Esophagus muscularis mucosa (tissue), 4 donors: ENCODE measurements at regions of chr1 and their contacts with region 1.

Region 1: DNA sequence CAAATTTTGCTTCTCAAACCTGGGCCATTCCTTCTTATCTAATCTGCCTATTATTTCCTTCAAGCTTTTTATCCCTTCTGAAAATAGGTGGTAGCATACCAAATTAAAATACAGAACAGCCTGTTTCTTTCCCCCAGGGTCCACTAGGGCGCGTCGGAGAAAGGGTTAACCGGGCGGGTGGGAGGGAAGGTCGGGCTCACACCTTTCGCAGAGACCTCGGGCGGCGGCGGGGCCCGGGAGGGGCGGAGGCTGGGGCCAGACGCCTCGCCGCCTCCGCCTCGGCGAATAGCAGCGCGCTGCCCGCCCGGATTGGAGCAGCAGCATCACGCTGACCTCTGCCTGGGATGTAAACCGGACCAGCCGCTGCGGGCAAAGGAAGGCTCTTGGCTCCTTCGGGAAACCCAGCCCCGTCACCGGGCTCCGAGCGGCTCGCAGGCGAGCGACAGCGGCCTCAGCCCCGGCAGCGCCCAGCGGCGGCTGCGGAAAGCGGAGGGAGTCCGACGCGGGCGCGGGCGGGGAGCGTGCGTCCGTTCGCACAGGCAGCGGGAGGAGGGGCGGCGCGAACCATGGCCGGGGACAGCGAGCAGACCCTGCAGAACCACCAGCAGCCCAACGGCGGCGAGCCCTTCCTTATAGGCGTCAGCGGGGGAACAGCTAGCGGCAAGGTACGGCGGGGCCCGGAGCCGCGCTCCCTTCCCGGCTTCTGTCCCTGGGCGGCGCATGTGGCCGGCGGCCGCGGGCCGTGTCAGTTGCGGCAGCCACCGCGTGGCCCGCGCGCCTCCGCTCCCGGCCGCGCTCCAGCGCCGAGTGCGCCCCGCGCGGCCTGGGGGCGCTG is at the start of gene UCK2:
- DNase-seq: peak; percentile 93
- H3K4me3 ChIP-seq: peak within 1 kb of the TSS; percentile 78 to 93 (median 86)
- H3K27ac ChIP-seq: peak within 1 kb of the TSS; percentile 88 to 97 (median 90)
- H3K4me1 ChIP-seq: peaks cover 14 to 24% (median 19%) of the 10 kb centered on the region in 4 donors
- H3K27me3 ChIP-seq: no peaks in the 10 kb centered on the region
- CTCF ChIP-seq: peak in 1 of 3 experiments; percentile 18
- EP300 ChIP-seq: no peak
- POLR2A ChIP-seq: peak; percentile 63
- total RNA-seq, gene UCK2: 13.7 to 33.7 (median 31.0) TPM

Region 2: GRCh38 chr1:165726169-165726568 is 101.3 kb before region 1 on chr1:
- intact Hi-C with region 1: no loop called
- DNase-seq: no peak
- H3K4me3 ChIP-seq: no peak overlapping the region
- H3K27ac ChIP-seq: no peak overlapping the region
- H3K4me1 ChIP-seq: no peaks in the 10 kb centered on the region
- H3K27me3 ChIP-seq: no peaks in the 10 kb centered on the region
- CTCF ChIP-seq: no peak
- EP300 ChIP-seq: no peak
- POLR2A ChIP-seq: no peak

Region 3: DNA sequence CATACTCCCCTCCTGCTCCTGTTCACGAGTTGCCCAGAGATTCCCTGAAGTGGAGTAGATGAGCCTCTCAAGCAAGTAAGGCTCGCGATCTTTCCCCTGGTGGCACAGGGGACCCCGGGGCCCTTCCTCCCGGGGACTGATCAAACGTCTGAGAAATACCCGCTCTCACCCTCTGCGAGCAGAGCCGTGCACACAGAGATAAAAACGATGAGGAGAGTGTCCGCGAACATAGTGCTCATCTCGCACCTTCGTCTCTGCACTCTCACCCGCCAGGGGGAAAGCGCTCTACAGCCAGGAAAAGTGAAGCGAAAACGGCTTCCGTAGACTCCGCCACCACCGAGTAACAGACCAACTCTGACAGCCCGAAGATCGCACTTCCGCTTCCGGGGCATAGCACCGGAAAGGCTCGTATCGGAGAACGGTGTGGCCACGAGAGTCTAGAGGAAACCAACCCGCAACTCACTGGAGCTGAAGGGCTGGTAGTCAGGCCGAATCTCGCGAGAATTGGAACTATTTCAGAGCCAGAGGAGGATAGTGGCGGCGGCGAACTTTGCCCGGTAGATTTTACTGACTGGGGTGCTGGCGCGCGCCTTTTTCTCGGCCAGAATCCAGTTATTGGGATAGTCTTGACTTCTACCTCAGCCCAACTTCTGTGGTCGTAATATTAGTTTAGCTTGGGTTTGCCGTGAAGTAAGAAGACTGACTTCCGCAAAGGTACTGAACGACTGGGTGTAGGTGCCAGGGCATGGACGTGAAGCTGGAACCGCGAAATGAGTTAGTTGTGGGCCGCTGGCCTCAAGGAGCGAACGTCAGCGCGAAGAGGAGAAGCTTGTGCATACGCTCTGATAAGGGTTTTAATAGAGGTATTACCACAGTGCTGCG is 58.7 kb before region 1 on chr1 and contains the start of gene TMCO1:
- intact Hi-C with region 1: loop called (anchors 5 kb)
- DNase-seq: peak; percentile 98
- H3K4me3 ChIP-seq: peak within 1 kb of the TSS; percentile 59 to 93 (median 82)
- H3K27ac ChIP-seq: peak within 1 kb of the TSS; percentile 83 to 94 (median 87)
- H3K4me1 ChIP-seq: peaks cover 19 to 47% (median 41%) of the 10 kb centered on the region in 4 donors
- H3K27me3 ChIP-seq: no peaks in the 10 kb centered on the region
- CTCF ChIP-seq: peak; percentile 5 to 25 (median 12)
- EP300 ChIP-seq: no peak
- POLR2A ChIP-seq: no peak
- total RNA-seq, gene TMCO1: 36.0 to 45.7 (median 37.8) TPM

Region 4: GRCh38 chr1:165898837-165899236 is 71.4 kb after region 1 on chr1:
- intact Hi-C with region 1: loop called (anchors 5 kb)
- DNase-seq: no peak
- H3K4me3 ChIP-seq: no peak overlapping the region
- H3K27ac ChIP-seq: peak overlapping the region; percentile 1 to 59 (median 3)
- H3K4me1 ChIP-seq: peaks cover 18 to 37% (median 22%) of the 10 kb centered on the region in 4 donors
- H3K27me3 ChIP-seq: no peaks in the 10 kb centered on the region
- CTCF ChIP-seq: no peak
- EP300 ChIP-seq: no peak
- POLR2A ChIP-seq: no peak